H1 (cell line): ENCODE measurements at regions of chr15 and their contacts with region 1.

Region 1: GRCh38 chr15:50685976-50686467 is 575 bp downstream of the TRPM7 start:
- DNase-seq: peak; percentile 17 to 72
- H3K4me3 ChIP-seq: peak overlapping the region; percentile 84 to 95 (median 88)
- H3K27ac ChIP-seq: peak overlapping the region; percentile 67; the same call in 1 of the 2 replicates
- H3K4me1 ChIP-seq: peaks cover 0 to 4% (median 2%) of the 10 kb centered on the region in 4 experiments; a peak in 2 of 7 replicates
- H3K27me3 ChIP-seq: no peaks in the 10 kb centered on the region
- CTCF ChIP-seq: no peak
- EP300 ChIP-seq: no peak
- POLR2A ChIP-seq: peak in 1 of 2 experiments; percentile 25; a peak in 1 of 3 replicates
- RAD21 ChIP-seq: no peak

Region 2: DNA sequence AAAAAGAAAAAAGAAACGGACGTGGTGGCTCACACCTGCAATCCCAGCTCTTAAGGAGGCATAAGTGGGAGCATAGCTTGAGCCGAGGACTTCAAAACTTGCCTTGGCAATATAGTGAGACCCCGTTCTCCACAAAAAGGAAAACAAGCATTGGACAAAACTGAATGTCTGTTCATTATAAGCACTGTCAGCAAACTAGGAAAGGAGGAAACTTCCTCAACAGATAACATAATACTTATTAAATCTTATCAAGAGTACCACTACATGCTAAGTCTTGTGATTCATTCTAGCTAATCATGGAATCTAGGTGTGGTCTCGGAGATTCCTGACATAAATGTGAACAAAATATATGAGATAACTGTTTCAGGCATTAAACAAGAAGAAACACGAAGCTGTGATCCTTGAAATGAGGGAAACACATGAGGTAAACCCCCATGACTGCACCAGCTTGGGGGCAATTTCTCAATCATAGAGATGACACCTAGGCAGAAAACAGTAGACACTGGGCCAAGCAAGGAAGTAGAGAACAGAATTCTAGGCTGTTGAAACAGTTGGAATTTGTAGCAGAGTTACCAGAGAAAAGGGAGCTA is 32.8 kb before region 1 on chr15:
- CTCF ChIA-PET with region 1: no interaction called
- POLR2A ChIA-PET with region 1: no interaction called
- DNase-seq: no peak
- H3K4me3 ChIP-seq: no peak overlapping the region
- H3K27ac ChIP-seq: no peak overlapping the region
- H3K4me1 ChIP-seq: peaks cover 0 to 4% (median 0%) of the 10 kb centered on the region in 4 experiments; a peak in 2 of 7 replicates
- H3K27me3 ChIP-seq: no peaks in the 10 kb centered on the region
- CTCF ChIP-seq: no peak
- EP300 ChIP-seq: no peak
- POLR2A ChIP-seq: no peak
- RAD21 ChIP-seq: no peak

Region 3: DNA sequence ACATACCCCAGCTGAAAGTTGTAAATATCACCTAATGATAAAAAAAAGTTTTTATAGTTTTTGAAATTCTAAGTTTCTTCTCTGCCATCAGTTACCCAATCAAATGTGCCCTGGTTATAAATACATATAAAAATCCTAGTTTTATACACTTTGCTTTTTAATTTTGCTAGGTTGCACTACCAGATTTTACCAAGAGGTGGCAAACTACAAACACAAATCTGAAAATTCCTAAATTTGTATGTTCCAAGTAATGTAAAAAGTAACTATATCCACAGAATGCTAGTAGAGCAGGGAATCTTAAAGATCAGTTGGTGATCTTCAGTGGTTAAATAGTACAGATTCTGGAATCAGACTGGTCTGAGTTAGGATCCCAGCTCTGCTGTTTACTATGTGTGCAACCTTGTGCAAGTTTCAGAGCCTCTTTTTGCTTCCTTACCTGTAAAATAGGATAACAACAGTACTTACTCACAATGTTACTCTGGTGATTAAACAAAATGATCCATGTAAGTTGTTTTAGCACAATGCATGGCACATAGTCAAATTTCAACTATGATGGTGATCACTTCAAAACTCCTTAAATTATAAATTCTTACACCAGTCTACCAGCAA is 10.4 kb before region 1 on chr15:
- CTCF ChIA-PET with region 1: interaction called, 14 read pairs
- POLR2A ChIA-PET with region 1: interaction called, 5 read pairs
- DNase-seq: no peak
- H3K4me3 ChIP-seq: no peak overlapping the region
- H3K27ac ChIP-seq: no peak overlapping the region
- H3K4me1 ChIP-seq: no peaks in the 10 kb centered on the region
- H3K27me3 ChIP-seq: no peaks in the 10 kb centered on the region
- CTCF ChIP-seq: peak in 2 of 3 experiments; percentile 20 to 27; a peak in 2 of 4 replicates
- EP300 ChIP-seq: no peak
- POLR2A ChIP-seq: no peak
- RAD21 ChIP-seq: peak in 1 of 2 experiments; percentile 33; a peak in 3 of 4 replicates